ENCODE measurements at regions of chr1 and their contacts with region 1.

Region 1: DNA sequence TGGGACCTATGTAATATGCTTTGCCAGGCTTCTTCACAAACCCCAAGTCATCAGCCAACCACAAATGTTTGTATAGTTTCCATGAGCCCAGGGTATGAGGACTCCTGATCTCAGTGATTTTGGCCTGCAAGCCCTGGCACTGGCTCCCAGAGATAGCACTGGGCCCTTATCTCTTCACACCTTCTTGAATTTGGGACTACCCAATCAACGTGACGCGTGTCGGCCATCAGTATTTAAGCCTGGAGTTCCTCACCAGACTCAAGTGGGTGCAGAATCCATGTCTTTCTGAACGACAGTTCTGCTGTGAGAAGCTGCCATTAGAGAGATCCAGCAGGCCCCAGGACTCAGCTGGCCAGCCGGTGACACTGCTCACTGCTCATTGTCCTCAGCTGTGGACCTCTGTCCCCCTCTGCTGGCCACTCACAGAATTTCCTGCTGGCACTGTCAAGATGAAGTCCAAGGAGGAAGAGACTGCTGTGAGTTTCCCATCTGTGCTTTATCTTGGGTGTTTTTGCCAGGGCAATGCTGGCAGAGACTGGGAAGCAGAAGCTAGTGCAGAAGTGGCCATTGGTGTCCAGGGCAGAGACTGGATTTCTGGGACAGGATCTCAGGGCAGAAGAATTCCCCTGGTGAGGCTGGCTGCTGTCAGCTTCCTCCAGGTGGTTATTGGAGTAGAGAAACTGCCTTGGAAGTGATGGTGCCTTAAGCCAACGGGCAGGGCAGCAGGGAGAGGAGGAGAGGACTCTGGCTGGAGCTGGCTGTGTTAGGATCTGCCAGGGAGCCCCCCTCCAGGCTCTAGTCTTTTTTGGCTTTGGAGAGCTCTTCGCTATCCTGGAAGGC is 28.4 kb downstream of the TMCC2 start:
- DNase-seq: peak; percentile 61 to 95
- H3K4me3 ChIP-seq: no peak overlapping the region
- H3K27ac ChIP-seq: no peak overlapping the region
- H3K4me1 ChIP-seq: peaks cover 3 to 7% (median 4%) of the 10 kb centered on the region in 4 experiments; a peak in 4 of 7 replicates
- H3K27me3 ChIP-seq: no peaks in the 10 kb centered on the region
- CTCF ChIP-seq: peak; percentile 93 to 98 (median 98)
- EP300 ChIP-seq: no peak
- POLR2A ChIP-seq: no peak
- RAD21 ChIP-seq: peak; percentile 100

Region 2: DNA sequence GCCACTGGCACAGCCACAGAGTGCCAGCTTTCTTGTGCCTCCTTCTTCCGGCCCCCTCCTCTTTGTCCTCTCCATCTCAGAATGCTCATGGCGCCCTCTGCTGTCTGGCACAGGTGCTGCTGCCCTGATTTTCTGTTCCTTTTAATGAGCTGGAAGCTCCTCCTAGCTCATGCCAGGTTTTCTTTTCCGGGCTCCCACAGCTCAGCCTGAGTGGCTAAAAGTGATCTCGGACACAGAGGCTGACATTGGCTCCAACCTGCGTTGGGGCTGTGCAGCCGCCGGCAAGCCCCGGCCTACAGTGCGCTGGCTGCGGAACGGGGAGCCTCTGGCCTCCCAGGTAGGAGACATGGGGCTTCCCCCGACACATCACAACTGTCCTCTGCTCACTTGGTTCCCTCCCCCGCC is 194.5 kb before region 1 on chr1:
- CTCF ChIA-PET with region 1: interaction called, 35 read pairs
- POLR2A ChIA-PET with region 1: no interaction called
- DNase-seq: peak; percentile 67 to 99
- H3K4me3 ChIP-seq: no peak overlapping the region
- H3K27ac ChIP-seq: no peak overlapping the region
- H3K4me1 ChIP-seq: peaks cover 0 to 4% (median 2%) of the 10 kb centered on the region in 4 experiments; a peak in 4 of 7 replicates
- H3K27me3 ChIP-seq: no peaks in the 10 kb centered on the region
- CTCF ChIP-seq: peak; percentile 84 to 96 (median 95)
- EP300 ChIP-seq: no peak
- POLR2A ChIP-seq: no peak
- RAD21 ChIP-seq: peak; percentile 94 to 98

Region 3: GRCh38 chr1:205082431-205082830 is 173.7 kb before region 1 on chr1:
- CTCF ChIA-PET with region 1: interaction called, 15 read pairs
- POLR2A ChIA-PET with region 1: no interaction called
- DNase-seq: no peak
- H3K4me3 ChIP-seq: no peak overlapping the region
- H3K27ac ChIP-seq: no peak overlapping the region
- H3K4me1 ChIP-seq: no peaks in the 10 kb centered on the region
- H3K27me3 ChIP-seq: no peaks in the 10 kb centered on the region
- CTCF ChIP-seq: no peak
- EP300 ChIP-seq: no peak
- POLR2A ChIP-seq: no peak
- RAD21 ChIP-seq: no peak

Region 4: GRCh38 chr1:205133287-205133686 is 122.9 kb before region 1 on chr1:
- CTCF ChIA-PET with region 1: interaction called, 13 read pairs
- POLR2A ChIA-PET with region 1: no interaction called
- DNase-seq: no peak
- H3K4me3 ChIP-seq: no peak overlapping the region
- H3K27ac ChIP-seq: no peak overlapping the region
- H3K4me1 ChIP-seq: peaks cover 0 to under 1% (median 0%) of the 10 kb centered on the region in 4 experiments; a peak in 2 of 7 replicates
- H3K27me3 ChIP-seq: peaks cover 0 to 2% (median 0%) of the 10 kb centered on the region in 4 experiments; a peak in 1 of 7 replicates
- CTCF ChIP-seq: no peak
- EP300 ChIP-seq: no peak
- POLR2A ChIP-seq: no peak
- RAD21 ChIP-seq: no peak

Region 5: DNA sequence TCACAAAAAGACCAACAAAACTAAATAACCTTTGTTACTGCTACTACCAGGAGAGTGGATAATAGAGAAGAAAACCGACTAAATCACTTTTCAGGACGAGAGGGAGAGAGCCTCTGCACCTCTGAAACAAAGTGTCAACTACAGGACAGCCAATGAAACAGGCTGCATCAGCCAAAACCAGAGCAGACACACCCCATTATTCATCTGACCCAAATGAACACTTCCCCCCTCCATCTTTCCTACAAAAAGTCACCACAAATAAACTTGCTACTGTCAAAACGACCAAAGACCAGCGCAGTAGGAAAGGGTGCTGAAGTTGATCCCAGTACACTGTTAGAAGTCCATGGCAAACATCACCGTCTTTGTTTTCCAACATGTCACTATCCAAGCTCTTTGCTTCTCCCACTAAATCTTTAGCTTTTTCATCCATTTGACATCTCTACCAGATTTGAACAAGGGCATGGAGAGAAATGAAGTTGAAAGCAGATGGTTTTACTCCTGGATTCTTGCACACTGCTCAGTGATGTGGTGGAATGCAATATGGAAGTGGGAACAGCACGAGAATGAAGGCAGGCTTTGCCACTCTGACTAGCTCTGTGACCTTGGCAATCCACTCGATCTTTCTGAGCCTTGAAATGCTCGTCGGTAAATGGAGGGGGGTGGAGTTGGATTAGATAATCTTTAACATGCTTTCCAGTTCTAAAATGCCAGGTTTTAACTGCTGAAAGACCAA is 65.2 kb before region 1 on chr1:
- CTCF ChIA-PET with region 1: interaction called, 11 read pairs
- POLR2A ChIA-PET with region 1: interaction called, 3 read pairs
- DNase-seq: no peak
- H3K4me3 ChIP-seq: peak overlapping the region in 2 of 4 experiments; percentile 15 to 34; a peak in 3 of 8 replicates
- H3K27ac ChIP-seq: no peak overlapping the region
- H3K4me1 ChIP-seq: peaks cover 5 to 45% (median 30%) of the 10 kb centered on the region in 4 experiments
- H3K27me3 ChIP-seq: no peaks in the 10 kb centered on the region
- CTCF ChIP-seq: no peak
- EP300 ChIP-seq: no peak
- POLR2A ChIP-seq: no peak
- RAD21 ChIP-seq: no peak

Measured in H1 (cell line).